Activated CD4-positive, alpha-beta memory T cell treated with anti-CD3 and anti-CD28 coated beads, Interleukin-2, amount 10 ng/mL, durations not matched to agents 7 days and 5 days (primary cell): ENCODE measurements at regions of chr3 and their contacts with region 1.

Region 1: GRCh38 chr3:73086071-73086494 is 24.6 kb downstream of the EBLN2 start:
- DNase-seq: peak; percentile 44
- H3K4me3 Mint-ChIP-seq: no peak overlapping the region
- H3K27ac Mint-ChIP-seq: no peak overlapping the region
- H3K4me1 Mint-ChIP-seq: peaks cover 7% of the 10 kb centered on the region
- H3K27me3 Mint-ChIP-seq: peaks cover 5% of the 10 kb centered on the region

Region 2: GRCh38 chr3:72523429-72524151 is 562.5 kb before region 1 on chr3:
- CTCF ChIA-PET with region 1: no interaction called
- POLR2A ChIA-PET with region 1: no interaction called
- DNase-seq: no peak
- H3K4me3 Mint-ChIP-seq: no peak overlapping the region
- H3K27ac Mint-ChIP-seq: no peak overlapping the region
- H3K4me1 Mint-ChIP-seq: peaks cover 36% of the 10 kb centered on the region
- H3K27me3 Mint-ChIP-seq: no peaks in the 10 kb centered on the region

Region 3: DNA sequence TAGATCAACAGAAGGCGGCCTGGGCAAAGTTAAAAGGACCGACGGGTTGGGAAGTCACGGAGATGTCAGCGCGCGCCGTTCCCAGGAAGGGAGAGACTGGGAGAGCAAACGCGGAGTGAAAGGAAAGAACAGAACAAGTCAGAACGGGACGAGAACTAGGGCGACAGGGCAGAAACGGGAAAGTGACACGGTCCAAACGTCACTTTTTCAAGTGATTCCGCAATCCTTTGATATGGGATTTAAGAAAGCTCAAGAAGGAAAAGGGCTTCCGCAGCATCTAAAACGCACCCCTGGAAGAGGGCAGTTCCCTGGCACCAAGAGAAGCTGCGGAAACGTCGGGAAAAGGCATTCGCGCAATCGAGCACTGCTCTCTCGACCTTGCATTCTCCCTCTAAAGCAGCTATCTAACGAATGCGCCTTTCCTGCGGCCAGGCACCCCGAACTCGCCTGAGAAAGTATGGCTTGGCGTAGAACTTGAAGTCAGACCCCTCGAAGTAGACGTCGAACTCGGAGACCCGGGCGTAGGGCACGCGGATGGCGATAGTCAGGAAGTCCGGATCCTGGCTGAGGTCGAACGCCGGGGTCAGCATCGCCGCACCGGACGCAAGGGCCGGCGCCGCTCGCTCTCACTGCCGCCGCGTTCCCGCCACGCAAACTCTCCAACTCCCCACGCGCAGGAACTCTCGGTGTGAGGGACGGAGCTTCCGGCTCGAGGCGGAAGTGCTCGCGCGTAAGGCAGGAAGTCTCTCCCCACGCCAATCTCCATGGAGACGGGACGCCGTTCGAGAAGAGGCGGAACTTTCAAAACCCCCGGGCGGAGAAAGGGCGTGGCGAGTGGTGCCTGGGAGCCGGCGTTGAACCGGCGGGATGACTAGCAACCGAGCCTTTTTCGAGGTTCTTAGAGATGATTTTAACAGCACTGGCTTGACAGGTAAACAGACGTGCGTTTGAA is 238.1 kb before region 1 on chr3 and contains the start of gene SHQ1:
- CTCF ChIA-PET with region 1: interaction called, 61 read pairs
- POLR2A ChIA-PET with region 1: no interaction called
- DNase-seq: peak; percentile 95
- H3K4me3 Mint-ChIP-seq: peak within 1 kb of the TSS; percentile 93
- H3K27ac Mint-ChIP-seq: peak within 1 kb of the TSS; percentile 47
- H3K4me1 Mint-ChIP-seq: peaks cover 51% of the 10 kb centered on the region
- H3K27me3 Mint-ChIP-seq: peaks cover 17% of the 10 kb centered on the region
- total RNA-seq, gene SHQ1: 16.7 to 20.6 TPM

Region 4: DNA sequence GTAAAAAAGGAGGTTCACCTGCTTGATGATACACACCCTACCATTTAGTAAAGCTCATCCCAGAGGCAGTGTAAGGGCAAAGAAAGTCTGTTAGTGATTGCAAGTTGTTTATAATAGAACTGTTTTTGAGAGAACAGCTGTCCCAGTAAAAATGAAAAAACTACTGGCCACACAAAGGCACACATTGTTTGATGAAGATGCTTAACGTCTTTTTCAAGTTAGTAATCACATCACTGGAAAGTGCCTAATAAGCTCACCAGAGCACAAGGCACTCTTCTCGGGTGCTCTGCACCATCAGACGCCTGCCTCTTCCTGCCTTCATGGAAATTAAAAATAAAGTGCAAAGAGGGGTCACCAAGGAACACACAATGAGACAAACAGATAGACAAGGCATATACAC is 351.7 kb after region 1 on chr3:
- CTCF ChIA-PET with region 1: no interaction called
- POLR2A ChIA-PET with region 1: no interaction called
- DNase-seq: no peak
- H3K4me3 Mint-ChIP-seq: no peak overlapping the region
- H3K27ac Mint-ChIP-seq: no peak overlapping the region
- H3K4me1 Mint-ChIP-seq: no peaks in the 10 kb centered on the region
- H3K27me3 Mint-ChIP-seq: peaks cover 3% of the 10 kb centered on the region